ENCODE measurements at regions of chr22 and their contacts with region 1.

Region 1: DNA sequence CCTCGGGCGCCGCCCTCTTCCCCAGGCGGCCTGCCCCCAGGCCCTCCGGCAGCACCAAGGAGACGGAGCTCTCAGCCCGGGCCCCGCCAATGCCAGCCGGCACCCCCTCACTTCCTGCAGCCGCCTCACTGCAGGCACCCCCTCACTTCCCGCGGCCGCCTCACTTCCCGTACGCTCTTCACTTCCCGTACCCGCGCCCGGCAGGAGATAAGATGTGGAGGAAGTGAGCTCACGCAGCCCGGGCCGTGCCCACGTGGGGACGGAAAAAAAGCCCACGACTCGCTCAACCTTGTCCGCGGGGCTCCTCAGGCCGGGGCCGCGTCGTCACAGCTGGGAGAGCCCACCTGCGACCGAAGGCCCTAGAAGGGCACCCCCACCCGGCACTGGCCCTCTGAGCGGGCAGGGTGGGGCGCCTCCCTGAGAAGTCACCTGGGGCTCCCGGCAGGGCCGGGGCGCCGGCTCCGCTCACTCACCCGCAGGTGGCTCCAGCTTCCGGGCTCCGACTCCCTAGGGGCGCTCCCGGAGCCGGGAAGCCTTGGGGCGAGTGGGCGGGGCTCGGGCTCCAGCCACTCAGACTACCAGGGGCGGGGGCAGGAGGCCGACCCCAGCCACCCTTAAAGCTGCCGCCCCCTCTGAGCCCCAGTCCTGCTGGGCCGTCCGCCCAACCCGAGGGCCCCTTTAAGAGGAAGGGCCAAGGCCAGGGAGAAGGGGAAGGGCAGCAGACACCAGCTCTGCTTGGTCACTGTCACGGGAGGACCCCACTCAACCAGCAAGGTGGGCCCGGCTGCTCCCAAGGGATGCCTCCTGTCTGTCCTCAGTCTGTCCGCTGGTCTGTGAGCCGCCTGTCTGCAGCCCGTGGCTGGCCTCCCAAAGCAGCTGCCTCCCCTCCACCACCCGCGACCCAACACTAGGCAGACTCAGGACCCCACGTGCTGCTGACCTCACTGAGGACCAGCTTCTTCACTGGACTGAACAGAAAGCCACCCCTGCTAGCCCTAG is 31.4 kb downstream of the PISD start:
- DNase-seq: peak; percentile 73 to 95 (median 86)
- ATAC-seq: peak; percentile 91
- H3K4me3 ChIP-seq: peak overlapping the region; percentile 74
- H3K4me3 Mint-ChIP-seq: peak overlapping the region; percentile 90
- H3K27ac ChIP-seq: peak overlapping the region; percentile 85 to 91
- H3K27ac Mint-ChIP-seq: peak overlapping the region; percentile 94
- H3K4me1 ChIP-seq: peaks cover 65% of the 10 kb centered on the region
- H3K4me1 Mint-ChIP-seq: peaks cover 41% of the 10 kb centered on the region
- H3K27me3 ChIP-seq: no peaks in the 10 kb centered on the region
- H3K27me3 Mint-ChIP-seq: no peaks in the 10 kb centered on the region
- CTCF ChIP-seq: no peak

Region 2: DNA sequence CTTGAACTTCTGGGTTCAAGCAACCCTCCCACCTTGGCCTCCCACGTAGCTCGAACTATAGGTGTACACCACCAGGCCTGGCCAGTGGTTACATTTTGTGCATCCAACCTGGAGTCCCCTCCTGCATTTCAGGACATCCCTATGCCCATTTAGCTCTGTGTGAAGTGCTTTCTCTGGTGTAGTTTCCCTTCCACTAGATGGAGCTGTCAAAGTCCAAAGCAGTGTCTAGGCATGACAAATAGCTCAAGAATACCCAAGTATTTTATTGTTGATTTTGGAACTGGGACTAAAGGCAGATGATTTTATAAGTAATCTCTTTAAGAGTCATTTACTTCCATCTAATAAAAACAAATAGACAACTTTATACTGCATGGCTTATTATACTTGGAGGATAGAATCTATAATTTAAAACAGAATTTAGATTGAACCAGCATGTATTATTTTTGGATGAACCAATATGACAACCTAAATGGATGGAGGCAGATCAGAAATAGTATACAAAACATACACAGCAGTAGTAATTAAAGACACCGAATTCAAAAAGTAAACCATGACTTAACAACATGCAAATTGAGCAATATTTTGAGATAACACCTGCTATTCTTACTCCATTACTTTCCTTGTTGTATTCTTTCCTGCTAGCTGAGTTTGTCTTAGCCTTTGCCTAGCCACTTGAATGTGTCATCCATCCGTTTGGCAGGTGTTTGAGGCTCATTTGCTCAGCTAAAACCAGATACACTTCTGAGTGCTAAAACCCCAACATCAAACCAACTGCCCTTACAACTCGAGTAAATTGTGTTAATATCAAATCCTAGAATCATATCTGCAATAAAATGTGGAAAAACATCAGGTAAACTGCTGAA is 178.7 kb before region 1 on chr22:
- CTCF ChIA-PET with region 1: no interaction called
- POLR2A ChIA-PET with region 1: interaction called, 6 read pairs
- intact Hi-C with region 1: loop called (anchors 1 to 2 kb)
- DNase-seq: peak in 3 of 14 experiments; percentile 47 to 57 (median 50)
- ATAC-seq: peak; percentile 56
- H3K4me3 ChIP-seq: no peak overlapping the region
- H3K4me3 Mint-ChIP-seq: no peak overlapping the region
- H3K27ac ChIP-seq: no peak overlapping the region
- H3K27ac Mint-ChIP-seq: no peak overlapping the region
- H3K4me1 ChIP-seq: no peaks in the 10 kb centered on the region
- H3K4me1 Mint-ChIP-seq: no peaks in the 10 kb centered on the region
- H3K27me3 ChIP-seq: no peaks in the 10 kb centered on the region
- H3K27me3 Mint-ChIP-seq: no peaks in the 10 kb centered on the region
- CTCF ChIP-seq: peak; percentile 50

Region 3: DNA sequence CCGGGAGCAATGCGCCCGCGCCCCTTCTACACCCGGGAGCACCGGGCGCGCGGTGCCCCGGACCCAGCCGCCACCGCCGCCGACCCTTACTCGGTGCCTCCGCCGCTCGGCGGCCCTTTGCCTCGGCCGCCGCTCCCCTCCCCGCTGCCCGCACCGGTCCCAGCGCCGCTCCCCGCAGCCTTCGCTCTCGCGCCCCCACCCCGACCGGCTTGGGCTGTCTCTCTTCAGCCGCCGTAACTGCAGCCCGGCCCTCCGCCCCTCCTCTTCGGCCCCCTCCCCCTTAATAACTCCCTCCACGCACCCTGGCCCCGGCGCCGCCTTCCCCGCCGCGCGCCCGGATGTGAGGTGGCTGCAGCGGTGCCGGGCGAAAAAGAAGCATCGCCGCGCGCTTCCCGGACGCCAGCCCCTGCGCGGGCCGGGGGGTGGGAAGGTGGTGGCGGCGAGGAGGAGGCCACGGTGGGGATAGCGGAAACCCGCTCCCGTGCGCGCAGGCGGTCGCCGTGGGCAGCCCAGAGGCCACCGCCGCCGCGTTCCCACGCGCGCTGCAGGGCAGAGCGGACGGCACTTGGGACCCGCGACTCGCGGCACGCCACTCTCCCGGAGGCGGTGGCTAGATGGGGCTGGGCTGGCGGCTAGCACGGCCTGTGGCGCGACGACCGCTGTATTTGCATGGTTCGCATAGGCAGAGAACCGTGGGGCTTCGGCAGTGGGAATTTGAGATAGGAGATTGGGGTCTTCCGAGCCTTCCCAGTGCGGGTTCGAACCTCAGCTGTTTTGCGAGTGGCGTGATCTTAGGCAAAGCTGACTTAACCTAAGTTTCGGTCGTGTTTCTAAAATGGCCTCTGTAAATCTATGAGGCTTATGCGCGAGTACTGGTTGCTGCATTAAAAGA is 140.8 kb before region 1 on chr22 and contains the start of gene EIF4ENIF1:
- CTCF ChIA-PET with region 1: no interaction called
- POLR2A ChIA-PET with region 1: no interaction called
- intact Hi-C with region 1: loop called (anchors 2 to 5 kb)
- DNase-seq: peak; percentile 78 to 93 (median 84)
- ATAC-seq: peak; percentile 77
- H3K4me3 ChIP-seq: peak within 1 kb of the TSS; percentile 78
- H3K4me3 Mint-ChIP-seq: peak within 1 kb of the TSS; percentile 91
- H3K27ac ChIP-seq: peak within 1 kb of the TSS; percentile 88 to 92
- H3K27ac Mint-ChIP-seq: peak within 1 kb of the TSS; percentile 97
- H3K4me1 ChIP-seq: peaks cover 38% of the 10 kb centered on the region
- H3K4me1 Mint-ChIP-seq: peaks cover 57% of the 10 kb centered on the region
- H3K27me3 ChIP-seq: no peaks in the 10 kb centered on the region
- H3K27me3 Mint-ChIP-seq: no peaks in the 10 kb centered on the region
- CTCF ChIP-seq: no peak
- total RNA-seq, gene EIF4ENIF1: 9.4 to 10.6 TPM

Region 4: DNA sequence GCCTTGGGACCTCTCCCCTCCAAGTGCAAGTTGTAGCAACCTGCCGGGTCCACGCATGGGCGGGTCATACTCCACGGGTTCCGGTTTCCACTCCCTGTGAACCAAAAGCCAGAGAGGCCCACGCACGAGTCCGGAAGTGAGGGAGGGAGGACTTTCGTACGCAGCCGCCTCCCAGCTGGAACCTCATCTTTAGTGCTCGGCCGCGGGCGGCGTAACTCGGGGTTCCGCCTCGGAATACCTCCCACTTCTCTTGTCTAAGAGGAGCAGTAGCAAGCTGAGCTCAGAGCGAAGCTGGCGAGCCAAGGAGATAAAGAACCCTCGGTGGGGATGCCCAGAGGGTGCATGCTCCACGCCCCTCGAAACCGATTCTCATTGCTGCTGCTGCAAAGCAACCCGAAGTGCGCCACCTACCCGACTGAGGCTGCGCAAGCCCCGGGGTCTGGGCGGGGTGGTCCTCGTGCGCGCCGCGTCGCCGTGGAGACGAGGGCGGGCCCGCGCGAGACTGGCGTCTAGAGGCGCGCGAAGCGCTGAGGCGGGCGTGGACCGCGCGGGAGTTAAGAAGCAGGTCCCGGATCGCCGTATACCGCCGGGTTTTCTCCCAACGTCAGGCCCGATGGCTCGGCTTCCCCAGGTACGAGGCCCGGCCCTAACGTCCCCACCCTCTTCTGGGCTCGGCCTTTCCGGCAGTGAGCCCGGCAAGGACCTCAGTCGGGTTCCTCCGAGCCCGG is 134.5 kb before region 1 on chr22 and contains the start of gene SFI1:
- CTCF ChIA-PET with region 1: no interaction called
- POLR2A ChIA-PET with region 1: interaction called, 12 read pairs
- intact Hi-C with region 1: loop called (anchors 2 to 5 kb)
- DNase-seq: peak; percentile 93 to 98 (median 96)
- ATAC-seq: peak; percentile 78
- H3K4me3 ChIP-seq: peak within 1 kb of the TSS; percentile 100
- H3K4me3 Mint-ChIP-seq: peak within 1 kb of the TSS; percentile 82
- H3K27ac ChIP-seq: peak within 1 kb of the TSS; percentile 94 to 97
- H3K27ac Mint-ChIP-seq: peak within 1 kb of the TSS; percentile 97
- H3K4me1 ChIP-seq: peaks cover 64% of the 10 kb centered on the region
- H3K4me1 Mint-ChIP-seq: peaks cover 57% of the 10 kb centered on the region
- H3K27me3 ChIP-seq: no peaks in the 10 kb centered on the region
- H3K27me3 Mint-ChIP-seq: no peaks in the 10 kb centered on the region
- CTCF ChIP-seq: peak; percentile 37
- total RNA-seq, gene SFI1: 281 to 291 TPM

Region 5: DNA sequence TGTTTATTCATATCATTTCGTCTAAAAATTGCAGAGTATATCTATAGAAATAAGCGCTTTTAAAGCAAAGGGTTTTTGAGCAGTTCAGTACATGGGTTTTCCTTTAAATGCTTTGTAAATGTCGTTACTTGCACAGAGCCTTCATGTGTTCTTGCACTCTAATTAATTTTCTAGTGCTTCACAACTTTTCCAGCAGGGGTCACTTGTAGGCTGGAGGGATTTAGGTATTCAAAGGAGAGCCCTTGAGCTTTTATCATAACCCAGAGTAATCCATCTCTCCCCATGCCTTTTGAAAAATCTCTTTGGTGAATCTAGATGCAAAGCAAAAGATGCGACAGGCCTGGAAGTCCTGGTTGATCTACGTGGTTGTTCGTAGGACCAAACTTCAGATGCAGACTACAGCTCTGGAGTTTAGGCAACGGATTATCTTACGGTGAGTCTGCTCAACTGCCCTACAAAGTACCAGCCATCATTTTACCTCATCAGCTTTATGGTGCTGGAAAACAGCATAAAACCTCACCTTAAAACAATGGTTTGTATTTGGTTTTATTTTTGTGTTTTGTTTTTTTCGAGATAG is 73.9 kb before region 1 on chr22:
- CTCF ChIA-PET with region 1: interaction called, 14 read pairs
- POLR2A ChIA-PET with region 1: no interaction called
- intact Hi-C with region 1: loop called (anchors 1 to 2 kb)
- DNase-seq: peak in 3 of 14 experiments; percentile 43 to 49 (median 44)
- ATAC-seq: peak; percentile 46
- H3K4me3 ChIP-seq: no peak overlapping the region
- H3K4me3 Mint-ChIP-seq: no peak overlapping the region
- H3K27ac ChIP-seq: no peak overlapping the region
- H3K27ac Mint-ChIP-seq: no peak overlapping the region
- H3K4me1 ChIP-seq: peaks cover 11% of the 10 kb centered on the region
- H3K4me1 Mint-ChIP-seq: peaks cover 12% of the 10 kb centered on the region
- H3K27me3 ChIP-seq: no peaks in the 10 kb centered on the region
- H3K27me3 Mint-ChIP-seq: no peaks in the 10 kb centered on the region
- CTCF ChIP-seq: peak; percentile 48

Region 6: DNA sequence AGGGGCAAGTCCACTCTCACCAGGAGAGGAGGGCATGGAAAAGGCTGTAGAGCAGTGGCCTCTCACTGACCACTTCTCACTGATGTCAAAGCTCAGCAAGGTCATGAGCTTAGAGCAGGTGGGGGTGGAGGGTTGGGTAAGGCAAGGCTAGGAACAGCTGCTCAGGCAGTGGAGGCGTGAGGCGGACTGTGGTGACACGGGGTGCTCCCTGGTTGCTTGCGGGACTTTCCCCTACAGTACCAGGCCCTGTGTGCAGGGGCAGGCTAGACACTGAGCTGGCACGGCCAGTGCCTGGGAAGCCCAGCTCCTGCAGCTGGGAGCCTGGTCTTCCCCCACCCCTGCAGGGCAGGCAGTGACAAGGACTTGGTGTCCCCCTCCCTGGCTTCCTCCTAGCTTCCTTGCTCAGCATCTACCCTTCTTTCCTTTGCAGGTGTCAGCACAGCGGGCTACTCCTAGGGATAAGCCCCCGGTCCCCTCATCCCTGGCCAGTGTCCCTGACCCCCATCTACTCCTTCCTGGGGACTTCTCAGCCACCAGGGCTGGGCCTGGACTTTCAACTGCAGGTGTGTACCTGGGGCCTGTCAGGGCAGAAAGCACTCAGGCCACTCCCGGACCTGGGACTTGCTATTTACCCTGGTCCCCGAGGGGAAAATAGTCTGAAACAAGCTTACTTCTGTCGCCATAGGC is 14.2 kb before region 1 on chr22:
- CTCF ChIA-PET with region 1: interaction called, 3 read pairs
- POLR2A ChIA-PET with region 1: interaction called, 12 read pairs
- intact Hi-C with region 1: loop called in 1 of 2 experiments (anchors 2 kb)
- DNase-seq: peak in 2 of 14 experiments; percentile 41 to 56
- ATAC-seq: no peak
- H3K4me3 ChIP-seq: no peak overlapping the region
- H3K4me3 Mint-ChIP-seq: no peak overlapping the region
- H3K27ac ChIP-seq: peak overlapping the region in 1 of 2 donors; percentile 53
- H3K27ac Mint-ChIP-seq: peak overlapping the region; percentile 56
- H3K4me1 ChIP-seq: peaks cover 19% of the 10 kb centered on the region
- H3K4me1 Mint-ChIP-seq: peaks cover 7% of the 10 kb centered on the region
- H3K27me3 ChIP-seq: no peaks in the 10 kb centered on the region
- H3K27me3 Mint-ChIP-seq: no peaks in the 10 kb centered on the region
- CTCF ChIP-seq: no peak

Measured in CD4-positive, alpha-beta T cell (primary cell).